ENCODE measurements at regions of chr18 and their contacts with region 1.

Region 1: DNA sequence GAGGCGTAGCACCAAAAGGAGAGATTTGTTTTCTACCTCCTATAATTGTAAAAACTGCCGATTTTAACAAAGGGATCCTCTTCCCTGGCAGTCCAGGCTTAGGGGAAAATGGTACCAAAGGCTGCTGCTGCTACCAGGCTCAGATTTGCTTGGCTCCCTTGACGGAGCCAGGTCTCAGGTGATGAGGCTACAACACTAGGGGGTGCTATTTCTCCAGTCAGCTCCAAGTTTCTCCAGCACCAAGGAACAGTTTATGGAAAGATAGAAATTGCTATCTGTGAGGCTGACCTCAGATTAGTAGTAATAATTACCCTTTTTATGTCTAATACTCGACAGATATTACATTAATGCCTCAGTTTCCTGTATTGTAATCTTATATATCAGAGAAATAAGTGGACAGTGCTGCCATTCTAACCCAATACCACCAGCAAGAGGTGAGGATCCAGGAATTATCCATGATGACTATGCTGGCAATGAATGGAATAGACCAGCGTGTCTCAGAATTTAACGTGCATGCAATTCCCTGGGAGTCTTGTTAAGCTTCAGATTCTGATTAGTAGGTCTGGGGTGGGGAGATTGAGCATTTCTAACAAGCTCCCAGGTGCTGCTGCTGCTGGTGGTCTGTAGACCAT is 111.3 kb downstream of the ESCO1 start:
- DNase-seq: peak; percentile 43
- ATAC-seq: no peak
- H3K4me3 ChIP-seq: no peak overlapping the region
- H3K4me3 Mint-ChIP-seq: no peak overlapping the region
- H3K27ac ChIP-seq: no peak overlapping the region
- H3K27ac Mint-ChIP-seq: no peak overlapping the region
- H3K4me1 ChIP-seq: no peaks in the 10 kb centered on the region
- H3K4me1 Mint-ChIP-seq: no peaks in the 10 kb centered on the region
- H3K27me3 ChIP-seq: no peaks in the 10 kb centered on the region
- H3K27me3 Mint-ChIP-seq: peaks cover 2% of the 10 kb centered on the region
- CTCF ChIP-seq: peak; percentile 65

Region 2: DNA sequence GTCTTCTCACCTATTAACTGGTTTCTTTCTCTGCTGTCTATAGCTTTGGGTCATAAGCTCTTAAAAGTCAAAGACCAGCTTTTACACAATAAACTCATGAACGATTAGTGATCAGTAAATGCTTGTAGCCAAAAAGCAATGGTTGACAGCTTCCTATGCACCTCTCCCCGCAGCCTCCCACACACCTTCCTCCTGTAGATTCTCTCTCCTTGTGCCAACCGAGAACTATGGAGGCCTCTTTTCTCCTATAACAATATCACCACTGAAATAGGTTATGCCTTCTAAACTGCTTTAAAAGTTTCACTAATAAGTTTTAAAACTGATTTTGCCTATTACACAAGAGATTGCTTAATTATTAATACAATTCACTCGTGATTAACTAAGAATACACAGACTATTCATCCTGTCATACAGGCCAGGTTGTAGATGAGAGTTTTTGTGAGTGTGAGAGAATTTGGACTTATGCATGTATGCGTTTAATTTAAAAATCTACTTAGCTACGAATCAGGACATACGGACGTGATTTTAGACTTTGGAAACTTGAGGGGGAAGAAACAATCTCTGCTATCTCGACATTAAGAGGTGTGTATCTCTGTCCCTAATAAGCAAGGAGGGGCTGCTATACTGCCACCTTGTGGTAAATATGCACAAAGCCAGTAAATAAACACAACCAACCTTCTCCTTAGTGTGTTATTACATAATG is 1214.8 kb after region 1 on chr18:
- CTCF ChIA-PET with region 1: interaction called, 3 read pairs
- POLR2A ChIA-PET with region 1: no interaction called
- intact Hi-C with region 1: loop called (anchors 5 kb)
- DNase-seq: peak; percentile 43
- ATAC-seq: no peak
- H3K4me3 ChIP-seq: no peak overlapping the region
- H3K4me3 Mint-ChIP-seq: no peak overlapping the region
- H3K27ac ChIP-seq: no peak overlapping the region
- H3K27ac Mint-ChIP-seq: no peak overlapping the region
- H3K4me1 ChIP-seq: no peaks in the 10 kb centered on the region
- H3K4me1 Mint-ChIP-seq: no peaks in the 10 kb centered on the region
- H3K27me3 ChIP-seq: no peaks in the 10 kb centered on the region
- H3K27me3 Mint-ChIP-seq: peaks cover 12% of the 10 kb centered on the region
- CTCF ChIP-seq: peak; percentile 82